ENCODE measurements at regions of chr18 and their contacts with region 1.

Region 1: GRCh38 chr18:51029694-51030536 is at the start of gene SMAD4:
- DNase-seq: peak; percentile 96 to 98
- H3K4me3 ChIP-seq: peak within 1 kb of the TSS; percentile 69 to 90
- H3K27ac ChIP-seq: peak within 1 kb of the TSS; percentile 99 to 100
- H3K4me1 ChIP-seq: peaks cover 6 to 10% of the 10 kb centered on the region in 2 donors
- H3K27me3 ChIP-seq: no peaks in the 10 kb centered on the region
- CTCF ChIP-seq: peak in 1 of 4 experiments; percentile 17
- POLR2A ChIP-seq: peak; percentile 91 to 94
- total RNA-seq, gene SMAD4: 104 to 198 (median 141) TPM

Region 2: GRCh38 chr18:50819728-50820378 is 210.1 kb before region 1 on chr18 and contains the start of gene MRO:
- intact Hi-C with region 1: no loop called
- DNase-seq: peak; percentile 79 to 81
- H3K4me3 ChIP-seq: peak within 1 kb of the TSS; percentile 22 to 37
- H3K27ac ChIP-seq: peak within 1 kb of the TSS in 1 of 2 donors; percentile 29
- H3K4me1 ChIP-seq: peaks cover 0 to 4% of the 10 kb centered on the region in 2 donors
- H3K27me3 ChIP-seq: peaks cover 0 to 2% of the 10 kb centered on the region in 2 donors
- CTCF ChIP-seq: peak; percentile 81 to 88 (median 86)
- POLR2A ChIP-seq: no peak
- total RNA-seq, gene MRO: 0.24 to 0.28 (median 0.26) TPM in 3 of 4 donors, not detected in the other

Region 3: DNA sequence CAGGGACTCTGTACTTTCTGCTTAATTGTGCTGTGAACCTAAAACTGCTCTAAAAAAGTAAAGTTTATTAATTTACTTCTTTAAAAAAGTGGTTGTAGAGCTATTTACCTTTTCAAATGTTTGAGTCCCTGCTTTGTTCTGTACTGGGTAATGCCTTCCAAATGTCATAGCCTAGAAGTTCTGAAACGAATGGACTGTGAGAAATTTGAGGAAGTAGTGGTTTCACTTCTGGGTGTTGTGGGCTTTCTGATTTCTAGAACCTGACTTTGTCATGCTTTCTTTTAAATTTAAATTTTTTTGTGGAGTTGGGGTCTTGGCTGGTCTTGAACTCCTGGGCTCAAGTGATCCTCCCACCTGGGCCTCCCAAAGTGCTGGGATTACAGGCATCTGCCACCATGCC is 44.7 kb after region 1 on chr18:
- intact Hi-C with region 1: loop called (anchors 5 kb)
- DNase-seq: no peak
- H3K4me3 ChIP-seq: no peak overlapping the region
- H3K27ac ChIP-seq: no peak overlapping the region
- H3K4me1 ChIP-seq: no peaks in the 10 kb centered on the region
- H3K27me3 ChIP-seq: no peaks in the 10 kb centered on the region
- CTCF ChIP-seq: no peak
- POLR2A ChIP-seq: no peak

Region 4: GRCh38 chr18:51197661-51198424 is 167.9 kb after region 1 on chr18 and contains the start of gene MEX3C:
- intact Hi-C with region 1: loop called (anchors 5 kb)
- DNase-seq: peak; percentile 99
- H3K4me3 ChIP-seq: peak within 1 kb of the TSS; percentile 56 to 65
- H3K27ac ChIP-seq: peak within 1 kb of the TSS; percentile 92 to 100
- H3K4me1 ChIP-seq: peaks cover 0 to 4% of the 10 kb centered on the region in 2 donors
- H3K27me3 ChIP-seq: no peaks in the 10 kb centered on the region
- CTCF ChIP-seq: peak in 2 of 4 experiments; percentile 9 to 26
- POLR2A ChIP-seq: peak; percentile 60 to 70
- total RNA-seq, gene MEX3C: 20.7 to 69.4 (median 40.7) TPM

Region 5: GRCh38 chr18:51361130-51361860 is 331.4 kb after region 1 on chr18:
- intact Hi-C with region 1: no loop called
- DNase-seq: no peak
- H3K4me3 ChIP-seq: no peak overlapping the region
- H3K27ac ChIP-seq: no peak overlapping the region
- H3K4me1 ChIP-seq: no peaks in the 10 kb centered on the region
- H3K27me3 ChIP-seq: no peaks in the 10 kb centered on the region
- CTCF ChIP-seq: no peak
- POLR2A ChIP-seq: no peak